A549 (cell line): ENCODE measurements at regions of chr2 and their contacts with region 1.

Region 1: DNA sequence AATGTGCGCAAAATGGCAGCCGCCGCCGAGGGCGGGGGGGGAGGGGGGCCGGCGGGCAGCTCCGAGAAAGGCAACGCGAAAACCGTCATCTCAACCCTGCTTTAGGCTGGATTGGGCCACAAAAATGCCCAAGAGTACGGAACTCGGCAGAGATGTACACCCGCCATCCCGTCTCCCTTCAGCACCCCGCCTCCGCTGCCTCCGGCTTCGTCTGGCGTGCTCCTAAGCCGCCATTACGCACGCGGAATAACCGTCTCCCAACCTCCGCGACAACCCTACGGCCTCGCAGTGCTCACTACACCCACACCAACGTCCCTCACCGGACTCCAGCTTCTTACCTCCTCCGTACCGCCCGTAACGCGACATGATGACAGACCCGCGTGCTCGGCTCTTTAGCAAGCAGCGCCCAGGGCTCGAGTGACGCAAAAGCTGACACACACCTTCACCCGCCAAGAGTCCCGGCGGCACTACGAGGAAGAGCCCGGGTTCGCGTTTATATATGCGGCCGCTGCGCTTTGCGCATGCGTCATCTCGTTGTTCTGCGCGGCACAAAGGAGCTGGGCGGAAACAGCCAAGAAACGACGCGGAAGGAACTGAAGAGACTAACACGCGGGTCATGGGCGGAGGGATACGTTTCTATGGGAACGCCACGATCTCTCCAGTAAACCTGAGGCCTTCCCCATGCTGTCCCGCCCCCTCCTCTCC is at the start of gene SRSF7:
- DNase-seq: peak; percentile 99 to 100
- ATAC-seq: peak; percentile 87 to 90
- H3K4me3 ChIP-seq: peak within 1 kb of the TSS; percentile 84
- H3K27ac ChIP-seq: peak within 1 kb of the TSS; percentile 96 to 98
- H3K4me1 ChIP-seq: peaks cover 40% of the 10 kb centered on the region
- CTCF ChIP-seq: no peak
- EP300 ChIP-seq: no peak
- POLR2A ChIP-seq: peak; percentile 100
- RAD21 ChIP-seq: 0 out of 5 replicates have a peak, but pooled peaks of 1 of the 2 experiments have one; percentile 17
- polyA plus RNA-seq, gene SRSF7: 356 and 544 TPM in 2 replicates

Region 2: DNA sequence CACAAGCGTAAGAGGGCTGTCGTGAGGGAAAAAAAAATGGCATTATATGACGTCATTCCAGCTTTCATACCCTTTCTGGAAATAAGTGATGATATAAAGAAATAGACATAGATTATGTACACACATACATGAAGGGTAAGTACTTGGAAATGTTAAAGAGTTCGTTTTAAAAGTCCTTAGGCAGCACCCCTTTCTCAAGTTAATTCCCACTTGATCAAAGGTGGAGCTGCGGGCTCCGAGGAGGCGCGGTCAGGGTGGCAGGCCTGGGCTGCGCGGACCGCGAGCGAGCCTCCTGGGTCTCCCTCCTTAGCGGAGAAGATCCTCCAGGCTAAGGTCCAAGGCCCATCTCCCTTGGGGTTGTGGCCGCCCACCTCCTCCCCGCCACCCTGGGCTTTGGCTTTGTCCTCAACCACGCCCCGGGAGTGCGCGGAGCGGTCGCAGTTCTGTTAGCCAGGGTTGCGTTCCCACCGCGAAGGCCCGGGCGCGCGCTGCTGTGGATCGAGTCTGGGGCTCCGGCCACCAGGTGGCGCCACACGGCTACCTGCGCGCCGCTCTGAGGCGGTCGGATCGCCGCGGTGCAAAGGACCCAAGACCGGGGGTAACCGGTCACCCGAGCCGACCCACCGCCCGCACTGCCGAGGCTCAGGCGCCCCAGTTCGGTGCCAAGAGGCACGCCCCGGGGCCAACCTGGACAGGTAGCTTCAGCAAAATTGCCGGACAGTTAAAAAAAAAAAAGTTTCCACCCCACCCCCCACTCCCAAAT is 215.1 kb before region 1 on chr2:
- CTCF ChIA-PET with region 1: interaction called, 15 read pairs
- POLR2A ChIA-PET with region 1: interaction called, 22 read pairs
- DNase-seq: peak; percentile 76 to 82
- ATAC-seq: peak; percentile 92 to 97
- H3K4me3 ChIP-seq: peak overlapping the region; percentile 68
- H3K27ac ChIP-seq: peak overlapping the region; percentile 71 to 86
- H3K4me1 ChIP-seq: 0 out of 3 replicates have a peak, but pooled peaks cover 3% of the 10 kb centered on the region
- CTCF ChIP-seq: peak; percentile 97
- EP300 ChIP-seq: no peak
- POLR2A ChIP-seq: no peak
- RAD21 ChIP-seq: peak; percentile 82 to 95

Region 3: GRCh38 chr2:38602732-38603401 is 148.2 kb before region 1 on chr2 and contains the start of gene HNRNPLL:
- CTCF ChIA-PET with region 1: interaction called, 7 read pairs
- POLR2A ChIA-PET with region 1: interaction called, 63 read pairs
- DNase-seq: peak; percentile 93 to 99
- ATAC-seq: peak; percentile 93 to 94
- H3K4me3 ChIP-seq: peak within 1 kb of the TSS; percentile 91
- H3K27ac ChIP-seq: peak within 1 kb of the TSS; percentile 95 to 97
- H3K4me1 ChIP-seq: peaks cover 39% of the 10 kb centered on the region
- CTCF ChIP-seq: no peak
- EP300 ChIP-seq: no peak
- POLR2A ChIP-seq: peak; percentile 98
- RAD21 ChIP-seq: no peak
- polyA plus RNA-seq, gene HNRNPLL: 67.5 and 73.8 TPM in 2 replicates

Region 4: DNA sequence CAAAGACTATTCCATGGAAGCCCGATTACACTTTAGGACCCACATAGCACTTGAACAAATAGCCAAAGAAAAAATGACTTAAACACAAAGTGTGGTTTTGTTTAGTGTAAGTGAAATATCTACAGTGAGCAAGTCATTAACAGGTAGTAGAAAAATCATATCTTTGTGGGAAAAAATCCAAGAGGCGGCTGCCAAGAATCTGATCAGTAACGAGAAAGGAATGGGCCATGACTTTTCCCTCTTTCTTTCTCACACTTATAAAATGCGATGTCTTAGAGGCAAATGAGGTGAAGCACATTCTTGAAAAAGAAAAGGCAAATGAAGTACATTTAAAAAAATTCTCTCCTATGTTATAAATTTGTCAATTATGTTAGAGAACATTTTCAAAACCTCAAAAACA is 14.1 kb after region 1 on chr2:
- CTCF ChIA-PET with region 1: interaction called, 4 read pairs
- POLR2A ChIA-PET with region 1: interaction called, 84 read pairs
- DNase-seq: no peak
- ATAC-seq: no peak
- H3K4me3 ChIP-seq: no peak overlapping the region
- H3K27ac ChIP-seq: no peak overlapping the region
- H3K4me1 ChIP-seq: no peaks in the 10 kb centered on the region
- CTCF ChIP-seq: no peak
- EP300 ChIP-seq: no peak
- POLR2A ChIP-seq: no peak
- RAD21 ChIP-seq: no peak

Region 5: DNA sequence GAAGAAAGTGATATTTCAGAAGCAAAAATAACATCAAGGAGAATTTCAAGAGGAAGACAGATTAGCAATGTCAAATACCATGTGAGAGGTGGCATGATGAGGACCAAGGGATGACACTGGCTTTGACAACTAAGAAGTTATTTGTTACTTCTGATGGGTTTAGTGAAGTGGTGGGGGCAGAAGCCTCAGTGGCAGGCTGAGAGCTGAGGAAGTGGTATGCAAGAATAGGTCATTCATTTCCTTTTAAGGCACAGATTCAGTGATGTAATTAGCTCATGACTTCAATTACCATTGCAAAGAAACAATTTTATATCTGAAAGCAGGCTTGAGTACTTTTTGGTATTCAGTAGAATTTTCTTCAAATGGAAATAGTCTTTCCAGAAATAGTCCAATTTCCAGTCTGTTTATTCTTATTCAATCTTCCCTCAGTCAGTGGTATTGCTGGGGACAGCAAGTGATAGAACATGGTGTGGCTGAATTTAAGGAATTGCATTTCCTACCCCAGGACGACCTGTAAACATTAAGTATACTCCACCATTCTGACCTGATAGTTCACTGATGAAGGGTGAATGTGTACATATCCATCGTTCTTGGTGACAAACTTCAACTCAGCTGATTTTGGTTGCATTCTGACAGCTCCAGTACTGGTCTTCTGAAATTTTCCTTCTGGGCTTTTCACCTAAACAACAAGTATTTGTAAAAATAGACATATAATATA is 55.1 kb after region 1 on chr2:
- CTCF ChIA-PET with region 1: no interaction called
- POLR2A ChIA-PET with region 1: interaction called, 38 read pairs
- DNase-seq: no peak
- ATAC-seq: no peak
- H3K4me3 ChIP-seq: no peak overlapping the region
- H3K27ac ChIP-seq: no peak overlapping the region
- H3K4me1 ChIP-seq: no peaks in the 10 kb centered on the region
- CTCF ChIP-seq: no peak
- EP300 ChIP-seq: no peak
- POLR2A ChIP-seq: no peak
- RAD21 ChIP-seq: no peak

Region 6: DNA sequence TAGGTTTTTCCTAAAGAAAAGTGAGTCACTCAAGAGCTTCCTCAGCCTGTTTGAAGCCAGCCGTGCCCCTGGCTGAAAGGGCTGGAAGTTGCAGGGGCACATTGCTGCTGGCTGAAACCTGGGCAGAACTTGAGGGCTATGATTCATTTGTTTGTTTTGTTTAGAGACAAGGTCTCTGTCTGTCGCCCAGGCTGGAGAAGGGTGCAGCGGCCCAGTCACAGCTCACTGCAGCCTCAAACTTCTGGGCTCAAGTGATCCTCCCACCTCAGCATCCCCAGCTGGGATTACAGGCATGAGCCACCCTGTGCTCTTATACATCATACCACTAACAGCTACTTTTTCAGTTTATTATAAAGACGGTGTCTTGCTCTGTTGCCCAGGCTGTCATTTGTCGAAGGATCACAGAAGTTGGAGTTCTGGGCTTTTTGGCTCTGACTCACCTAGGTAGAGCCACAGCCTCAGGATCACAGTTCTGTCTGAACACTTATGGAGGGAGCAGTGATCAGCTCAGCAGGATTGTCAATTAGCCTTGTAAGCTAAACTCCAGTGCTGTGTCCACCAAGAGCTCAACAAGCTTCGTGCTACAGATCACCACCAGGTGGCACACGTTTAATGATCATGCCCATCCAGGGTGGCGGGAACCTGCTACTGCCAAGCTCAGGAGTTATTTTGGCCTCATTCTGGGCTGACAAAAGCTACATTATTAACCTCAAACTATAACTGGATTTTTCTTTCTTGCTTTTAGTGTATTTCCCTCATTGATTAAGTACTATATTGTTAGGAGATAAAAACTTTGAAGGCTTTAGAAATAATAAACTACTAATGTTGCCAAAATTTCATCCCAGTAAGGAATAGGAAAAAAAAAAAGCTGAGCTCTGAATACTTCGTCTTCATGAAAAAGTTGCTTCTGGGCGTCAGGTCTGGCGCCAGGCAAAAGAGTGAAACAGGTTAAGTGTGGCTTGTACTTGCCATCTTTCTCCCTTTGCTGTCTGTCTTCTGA is 196.5 kb after region 1 on chr2:
- CTCF ChIA-PET with region 1: no interaction called
- POLR2A ChIA-PET with region 1: interaction called, 15 read pairs
- DNase-seq: peak; percentile 91 to 95
- ATAC-seq: peak; percentile 95 to 98
- H3K4me3 ChIP-seq: no peak overlapping the region
- H3K27ac ChIP-seq: peak overlapping the region; percentile 23 to 70; a peak in 5 of 6 replicates
- H3K4me1 ChIP-seq: peaks cover 15% of the 10 kb centered on the region
- CTCF ChIP-seq: peak; percentile 92
- EP300 ChIP-seq: no peak
- POLR2A ChIP-seq: no peak
- RAD21 ChIP-seq: peak; percentile 76 to 84